Mammary epithelial cell (primary cell): ENCODE measurements at regions of chr16 and their contacts with region 1.

Region 1: DNA sequence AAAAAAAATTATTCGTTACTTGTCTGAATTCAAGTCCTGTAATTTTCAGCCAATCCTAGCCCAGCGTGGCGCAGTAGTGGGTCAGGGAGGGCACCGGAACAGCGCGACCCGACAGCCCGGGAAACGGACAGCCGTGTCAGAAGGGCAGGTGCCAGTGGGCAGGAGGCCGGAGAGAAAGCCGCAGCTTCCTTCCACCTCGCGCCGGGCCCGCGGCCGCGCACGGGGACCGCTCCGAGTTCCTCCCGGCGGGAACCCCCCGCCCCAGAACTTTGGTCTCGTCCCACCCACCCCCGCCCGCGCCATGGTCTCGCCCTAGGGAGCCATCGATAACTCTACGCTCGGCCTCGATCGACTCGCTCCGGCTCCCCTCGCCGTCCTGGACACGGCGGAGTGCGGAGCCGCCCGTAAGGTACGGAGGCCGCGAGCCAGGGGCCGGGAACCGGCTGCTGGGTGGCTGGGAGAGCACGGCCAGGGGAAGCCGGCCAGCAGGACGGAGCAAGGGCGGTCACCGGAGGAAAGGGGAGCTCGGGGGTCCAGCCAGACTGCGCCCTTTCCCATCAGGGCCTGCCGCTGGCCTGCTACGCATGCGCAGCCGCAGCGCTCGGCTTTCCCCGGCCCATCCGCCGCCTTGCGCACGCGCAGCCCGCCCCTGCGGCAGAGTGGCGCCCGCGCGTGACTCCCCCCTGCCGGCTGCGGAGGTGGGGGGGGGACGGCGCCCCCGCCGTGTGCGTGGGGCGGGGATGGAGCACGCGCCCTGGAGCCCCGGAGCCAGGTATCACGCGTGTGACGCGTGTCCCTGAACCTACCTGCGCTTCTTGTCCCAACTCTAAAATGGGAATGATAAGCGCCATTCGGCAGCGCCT is at the start of gene MLST8:
- DNase-seq: peak; percentile 80
- H3K4me3 ChIP-seq: peak within 1 kb of the TSS; percentile 92 to 97 (median 95)
- H3K27ac ChIP-seq: peak within 1 kb of the TSS; percentile 80
- H3K4me1 ChIP-seq: peaks cover 16% of the 10 kb centered on the region
- H3K27me3 ChIP-seq: no peaks in the 10 kb centered on the region
- CTCF ChIP-seq: peak in 1 of 2 donors; percentile 22
- total RNA-seq, gene MLST8: 39.0 to 55.8 TPM

Region 2: DNA sequence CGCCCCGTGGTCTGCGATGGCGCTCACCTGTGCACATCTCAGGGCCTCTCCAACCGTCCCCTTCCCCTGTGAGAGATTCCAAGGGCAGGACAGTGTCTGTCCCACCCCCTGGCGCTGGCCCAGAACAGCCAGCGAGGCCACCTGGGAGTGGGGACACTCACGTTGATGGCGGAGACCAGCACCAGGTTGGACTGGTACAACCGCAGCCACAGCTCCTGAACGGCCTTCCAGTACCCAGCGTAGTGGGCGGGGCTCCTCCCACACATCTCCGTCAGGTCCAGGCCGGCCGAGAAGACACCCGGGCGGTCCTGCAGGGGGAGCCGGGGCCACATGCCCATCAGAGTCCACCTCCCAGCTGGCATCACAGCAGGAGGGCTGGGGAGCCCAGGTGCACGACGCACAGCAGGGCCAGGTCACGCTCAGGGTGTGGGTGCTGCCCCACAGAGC is 38.9 kb after region 1 on chr16:
- CTCF ChIA-PET with region 1: no interaction called
- dilution Hi-C with region 1: loop called (anchors 5 kb)
- in situ Hi-C with region 1: no loop called
- intact Hi-C with region 1: no loop called
- DNase-seq: peak; percentile 50
- H3K4me3 ChIP-seq: no peak overlapping the region
- H3K27ac ChIP-seq: no peak overlapping the region
- H3K4me1 ChIP-seq: peaks cover 10% of the 10 kb centered on the region
- H3K27me3 ChIP-seq: no peaks in the 10 kb centered on the region
- CTCF ChIP-seq: no peak

Region 3: DNA sequence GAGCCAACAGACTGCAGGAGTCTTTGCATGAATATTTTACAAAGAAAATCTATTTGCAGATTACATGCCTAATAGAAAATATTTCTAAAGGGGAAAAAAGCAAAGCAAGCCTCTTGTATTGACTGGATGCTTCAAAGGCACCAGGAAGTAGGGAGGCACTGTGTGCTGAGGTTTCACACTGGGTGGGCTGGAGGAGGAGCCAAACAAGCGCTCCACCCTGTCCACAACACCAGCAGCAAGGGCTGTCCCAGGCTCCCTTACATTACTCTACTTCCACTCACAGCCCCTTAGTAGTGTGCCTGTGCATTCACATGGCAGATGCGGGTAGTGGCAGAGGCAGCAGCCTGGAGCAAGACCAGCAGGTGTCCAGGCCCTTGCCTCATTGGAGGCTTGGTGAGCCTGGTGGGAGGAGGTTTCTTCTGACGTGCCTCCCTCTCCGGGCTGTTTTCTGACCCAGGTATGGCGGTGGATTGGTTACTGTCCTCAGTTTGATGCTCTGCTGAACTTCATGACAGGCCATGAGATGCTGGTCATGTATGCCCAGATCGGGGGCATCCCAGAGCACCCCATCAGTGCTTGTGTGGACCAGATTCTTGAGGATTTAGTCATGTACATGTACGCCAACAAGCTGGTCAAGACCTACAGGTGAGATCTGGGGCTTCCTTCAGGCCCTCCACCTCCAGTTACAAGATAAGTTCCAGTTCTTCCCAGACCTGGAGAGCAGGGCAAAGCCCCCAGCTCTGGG is 217.0 kb after region 1 on chr16:
- CTCF ChIA-PET with region 1: no interaction called
- dilution Hi-C with region 1: no loop called
- in situ Hi-C with region 1: no loop called
- intact Hi-C with region 1: no loop called
- DNase-seq: no peak
- H3K4me3 ChIP-seq: no peak overlapping the region
- H3K27ac ChIP-seq: no peak overlapping the region
- H3K4me1 ChIP-seq: no peaks in the 10 kb centered on the region
- H3K27me3 ChIP-seq: no peaks in the 10 kb centered on the region
- CTCF ChIP-seq: no peak